ENCODE measurements at regions of chr17 and their contacts with region 1.

Region 1: DNA sequence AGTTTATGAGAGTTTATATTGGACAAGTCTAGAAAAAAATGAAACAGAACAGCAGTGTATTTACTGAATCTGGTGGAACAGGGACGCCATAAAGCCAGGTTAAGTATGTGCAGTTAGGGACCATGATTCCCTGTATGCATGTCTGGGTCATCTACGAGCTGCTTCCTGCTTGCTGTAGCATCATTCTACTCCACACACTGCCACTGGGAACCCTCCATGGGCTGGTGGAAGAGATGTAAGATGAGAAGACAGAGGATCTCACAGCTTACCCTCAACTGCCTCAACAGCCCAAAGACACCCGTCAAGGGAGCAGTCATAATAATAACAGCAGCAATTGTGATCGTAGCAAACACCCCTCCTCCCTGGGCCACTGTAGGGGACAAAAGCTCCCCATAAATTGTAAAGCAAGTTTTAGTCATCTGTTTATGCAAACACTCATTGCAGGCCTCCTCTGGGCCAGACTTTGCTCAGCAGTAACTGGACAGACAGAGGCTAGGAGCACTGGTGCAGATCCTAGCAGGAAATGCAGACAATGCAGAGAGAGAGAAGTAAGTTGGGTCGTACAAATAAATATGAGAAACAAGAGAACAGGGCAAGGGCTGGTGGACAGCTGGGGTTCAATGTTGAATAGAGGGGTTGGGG is 188.0 kb downstream of the SOX9 start:
- DNase-seq: no peak
- ATAC-seq: no peak
- H3K4me3 Mint-ChIP-seq: no peak overlapping the region
- H3K27ac Mint-ChIP-seq: no peak overlapping the region
- H3K4me1 Mint-ChIP-seq: no peaks in the 10 kb centered on the region
- H3K27me3 Mint-ChIP-seq: peaks cover 3% of the 10 kb centered on the region

Region 2: DNA sequence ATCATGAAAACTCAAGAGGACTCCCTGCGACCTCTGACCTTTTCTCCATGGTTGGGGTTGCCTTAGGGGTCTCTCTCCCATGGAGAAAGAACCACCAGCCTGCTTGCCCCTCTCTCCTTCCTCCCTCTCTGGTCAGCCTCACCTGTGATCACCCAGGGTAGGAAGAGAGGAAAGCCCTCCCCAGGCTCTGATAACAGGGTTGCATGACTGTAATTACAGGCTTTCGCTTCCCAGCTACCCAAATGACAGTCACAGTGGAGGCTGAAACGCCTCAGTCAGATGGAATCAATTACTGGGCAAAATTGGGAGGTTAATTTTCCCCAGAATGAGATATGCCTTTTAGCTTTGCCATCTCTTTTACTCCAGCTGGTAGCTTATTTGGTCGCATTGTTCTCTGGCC is 453.9 kb before region 1 on chr17:
- CTCF ChIA-PET with region 1: no interaction called
- POLR2A ChIA-PET with region 1: interaction called, 14 read pairs
- intact Hi-C with region 1: no loop called
- DNase-seq: no peak
- ATAC-seq: no peak
- H3K4me3 Mint-ChIP-seq: no peak overlapping the region
- H3K27ac Mint-ChIP-seq: no peak overlapping the region
- H3K4me1 Mint-ChIP-seq: no peaks in the 10 kb centered on the region
- H3K27me3 Mint-ChIP-seq: no peaks in the 10 kb centered on the region

Region 3: GRCh38 chr17:72004611-72005331 is 304.1 kb before region 1 on chr17:
- CTCF ChIA-PET with region 1: no interaction called
- POLR2A ChIA-PET with region 1: no interaction called
- intact Hi-C with region 1: no loop called
- DNase-seq: no peak
- ATAC-seq: no peak
- H3K4me3 Mint-ChIP-seq: no peak overlapping the region
- H3K27ac Mint-ChIP-seq: no peak overlapping the region
- H3K4me1 Mint-ChIP-seq: peaks cover 3% of the 10 kb centered on the region
- H3K27me3 Mint-ChIP-seq: peaks cover 2% of the 10 kb centered on the region

Region 4: GRCh38 chr17:72151565-72152391 is 157.1 kb before region 1 on chr17:
- CTCF ChIA-PET with region 1: no interaction called
- POLR2A ChIA-PET with region 1: no interaction called
- intact Hi-C with region 1: no loop called
- DNase-seq: no peak
- ATAC-seq: no peak
- H3K4me3 Mint-ChIP-seq: no peak overlapping the region
- H3K27ac Mint-ChIP-seq: no peak overlapping the region
- H3K4me1 Mint-ChIP-seq: no peaks in the 10 kb centered on the region
- H3K27me3 Mint-ChIP-seq: peaks cover 2% of the 10 kb centered on the region

Region 5: GRCh38 chr17:72297326-72298115 is 11.3 kb before region 1 on chr17:
- CTCF ChIA-PET with region 1: interaction called, 5 read pairs
- POLR2A ChIA-PET with region 1: no interaction called
- intact Hi-C with region 1: loop called in 1 of 2 experiments (anchors 2 kb)
- DNase-seq: no peak
- ATAC-seq: no peak
- H3K4me3 Mint-ChIP-seq: no peak overlapping the region
- H3K27ac Mint-ChIP-seq: no peak overlapping the region
- H3K4me1 Mint-ChIP-seq: no peaks in the 10 kb centered on the region
- H3K27me3 Mint-ChIP-seq: no peaks in the 10 kb centered on the region

Region 6: GRCh38 chr17:72373910-72374741 is 65.3 kb after region 1 on chr17:
- CTCF ChIA-PET with region 1: no interaction called
- POLR2A ChIA-PET with region 1: no interaction called
- intact Hi-C with region 1: loop called in 1 of 2 experiments (anchors 10 kb)
- DNase-seq: no peak
- ATAC-seq: no peak
- H3K4me3 Mint-ChIP-seq: no peak overlapping the region
- H3K27ac Mint-ChIP-seq: no peak overlapping the region
- H3K4me1 Mint-ChIP-seq: no peaks in the 10 kb centered on the region
- H3K27me3 Mint-ChIP-seq: peaks cover 2% of the 10 kb centered on the region

Region 7: DNA sequence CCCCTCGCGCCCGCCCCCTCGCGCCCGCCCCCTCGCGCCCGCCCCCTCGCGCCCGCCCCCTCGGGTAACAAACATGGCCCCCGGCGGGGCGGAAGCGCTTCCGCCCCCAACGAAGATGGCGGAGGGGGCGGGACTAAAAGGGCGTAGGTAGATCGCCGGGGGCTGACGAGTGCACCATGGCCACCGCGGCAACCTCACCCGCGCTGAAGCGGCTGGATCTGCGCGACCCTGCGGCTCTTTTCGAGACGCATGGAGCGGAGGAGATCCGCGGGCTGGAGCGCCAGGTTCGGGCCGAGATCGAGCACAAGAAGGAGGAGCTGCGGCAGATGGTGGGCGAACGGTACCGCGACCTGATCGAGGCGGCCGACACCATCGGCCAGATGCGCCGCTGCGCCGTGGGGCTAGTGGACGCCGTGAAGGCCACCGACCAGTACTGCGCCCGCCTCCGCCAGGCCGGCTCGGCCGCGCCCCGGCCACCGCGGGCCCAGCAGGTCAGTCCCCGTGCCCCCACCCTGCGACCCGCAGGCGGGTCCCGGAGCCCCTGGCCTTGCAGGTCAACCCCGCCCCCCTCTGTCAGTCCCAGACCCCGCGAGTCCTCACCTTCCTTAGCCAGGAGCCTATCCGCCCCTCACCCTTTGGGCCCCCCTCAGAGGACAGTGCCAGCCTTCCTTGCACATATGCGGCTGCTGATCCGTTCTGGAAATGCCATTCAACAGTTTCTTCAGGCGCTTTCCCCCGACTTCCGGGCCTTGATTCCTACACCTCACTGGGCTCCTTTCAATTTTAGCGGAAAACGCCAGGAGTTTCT is 884.2 kb after region 1 on chr17 and contains the start of gene COG1:
- CTCF ChIA-PET with region 1: no interaction called
- POLR2A ChIA-PET with region 1: no interaction called
- intact Hi-C with region 1: no loop called
- DNase-seq: peak; percentile 91
- ATAC-seq: peak; percentile 78
- H3K4me3 Mint-ChIP-seq: peak within 1 kb of the TSS; percentile 91
- H3K27ac Mint-ChIP-seq: peak within 1 kb of the TSS; percentile 97
- H3K4me1 Mint-ChIP-seq: peaks cover 18% of the 10 kb centered on the region
- H3K27me3 Mint-ChIP-seq: no peaks in the 10 kb centered on the region
- total RNA-seq, gene COG1: 25.6 to 39.0 TPM

Measured in activated CD4-positive, alpha-beta T cell treated with anti-CD3 and anti-CD28 coated beads for 36 hours (primary cell).